Activated CD4-positive, alpha-beta T cell treated with anti-CD3 and anti-CD28 coated beads for 36 hours (primary cell): ENCODE measurements at regions of chr4 and their contacts with region 1.

Region 1: GRCh38 chr4:147090486-147090885 is 144.8 kb upstream of the TTC29 start:
- DNase-seq: no peak
- ATAC-seq: no peak
- H3K4me3 Mint-ChIP-seq: no peak overlapping the region
- H3K27ac Mint-ChIP-seq: no peak overlapping the region
- H3K4me1 Mint-ChIP-seq: no peaks in the 10 kb centered on the region
- H3K27me3 Mint-ChIP-seq: peaks cover 17% of the 10 kb centered on the region

Region 2: DNA sequence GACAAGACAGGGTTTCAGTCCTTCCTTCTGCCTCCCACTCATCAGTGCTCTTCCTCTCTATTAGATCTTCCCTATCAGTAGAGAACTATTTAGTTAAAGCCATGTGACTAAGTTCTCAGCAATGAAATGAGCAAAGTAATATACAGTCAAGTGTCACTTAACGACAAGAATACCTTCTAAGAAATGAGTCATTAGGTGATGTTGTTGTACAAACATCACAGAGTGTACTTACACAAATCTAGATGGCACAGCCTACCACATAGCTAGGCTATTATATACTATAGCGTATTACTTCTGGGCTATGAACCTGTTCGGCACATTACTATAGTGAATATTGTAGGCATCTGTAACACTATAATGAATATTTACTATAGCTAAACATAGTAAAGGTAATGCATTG is 380.5 kb before region 1 on chr4:
- CTCF ChIA-PET with region 1: no interaction called
- POLR2A ChIA-PET with region 1: no interaction called
- intact Hi-C with region 1: no loop called
- DNase-seq: no peak
- ATAC-seq: no peak
- H3K4me3 Mint-ChIP-seq: no peak overlapping the region
- H3K27ac Mint-ChIP-seq: no peak overlapping the region
- H3K4me1 Mint-ChIP-seq: no peaks in the 10 kb centered on the region
- H3K27me3 Mint-ChIP-seq: no peaks in the 10 kb centered on the region

Region 3: GRCh38 chr4:147019061-147019460 is 71.4 kb before region 1 on chr4:
- CTCF ChIA-PET with region 1: interaction called, 11 read pairs
- POLR2A ChIA-PET with region 1: no interaction called
- intact Hi-C with region 1: no loop called
- DNase-seq: peak; percentile 71
- ATAC-seq: no peak
- H3K4me3 Mint-ChIP-seq: no peak overlapping the region
- H3K27ac Mint-ChIP-seq: no peak overlapping the region
- H3K4me1 Mint-ChIP-seq: no peaks in the 10 kb centered on the region
- H3K27me3 Mint-ChIP-seq: peaks cover 2% of the 10 kb centered on the region

Region 4: GRCh38 chr4:147182041-147182440 is 91.6 kb after region 1 on chr4:
- CTCF ChIA-PET with region 1: no interaction called
- POLR2A ChIA-PET with region 1: no interaction called
- intact Hi-C with region 1: no loop called
- DNase-seq: no peak
- ATAC-seq: no peak
- H3K4me3 Mint-ChIP-seq: no peak overlapping the region
- H3K27ac Mint-ChIP-seq: no peak overlapping the region
- H3K4me1 Mint-ChIP-seq: no peaks in the 10 kb centered on the region
- H3K27me3 Mint-ChIP-seq: peaks cover 4% of the 10 kb centered on the region